HCT116 (cell line): ENCODE measurements at regions of chr15 and their contacts with region 1.

Region 1: GRCh38 chr15:42084460-42085235 is 9.7 kb downstream of the PLA2G4D start:
- DNase-seq: no peak
- ATAC-seq: peak; percentile 96
- H3K4me3 ChIP-seq: no peak overlapping the region
- H3K27ac ChIP-seq: no peak overlapping the region
- H3K4me1 ChIP-seq: peaks cover 0 to 10% of the 10 kb centered on the region in 2 experiments; a peak in 1 of 4 replicates
- H3K27me3 ChIP-seq: no peaks in the 10 kb centered on the region
- CTCF ChIP-seq: peak; percentile 74 to 90 (median 86)
- POLR2A ChIP-seq: no peak
- RAD21 ChIP-seq: peak; percentile 82

Region 2: GRCh38 chr15:41989259-41989933 is 95.3 kb before region 1 on chr15:
- CTCF ChIA-PET with region 1: interaction called, 24 read pairs
- POLR2A ChIA-PET with region 1: no interaction called
- RAD21 ChIA-PET with region 1: interaction called in 1 of 2 experiments, 4 read pairs
- intact Hi-C with region 1: loop called (anchors 1 kb)
- DNase-seq: peak; percentile 55
- ATAC-seq: peak; percentile 99
- H3K4me3 ChIP-seq: no peak overlapping the region
- H3K27ac ChIP-seq: no peak overlapping the region
- H3K4me1 ChIP-seq: no peaks in the 10 kb centered on the region
- H3K27me3 ChIP-seq: no peaks in the 10 kb centered on the region
- CTCF ChIP-seq: peak; percentile 95 to 98 (median 96)
- POLR2A ChIP-seq: no peak
- RAD21 ChIP-seq: peak; percentile 99

Region 3: GRCh38 chr15:42070279-42070975 is 14.2 kb before region 1 on chr15:
- CTCF ChIA-PET with region 1: interaction called, 11 read pairs
- POLR2A ChIA-PET with region 1: no interaction called
- RAD21 ChIA-PET with region 1: no interaction called
- intact Hi-C with region 1: no loop called
- DNase-seq: no peak
- ATAC-seq: no peak
- H3K4me3 ChIP-seq: no peak overlapping the region
- H3K27ac ChIP-seq: no peak overlapping the region
- H3K4me1 ChIP-seq: peaks cover 0 to 9% of the 10 kb centered on the region in 2 experiments; a peak in 2 of 4 replicates
- H3K27me3 ChIP-seq: no peaks in the 10 kb centered on the region
- CTCF ChIP-seq: no peak
- POLR2A ChIP-seq: no peak
- RAD21 ChIP-seq: no peak

Region 4: GRCh38 chr15:42137431-42138261 is 53.0 kb after region 1 on chr15:
- CTCF ChIA-PET with region 1: interaction called, 17 read pairs
- POLR2A ChIA-PET with region 1: no interaction called
- RAD21 ChIA-PET with region 1: interaction called, 3 to 4 read pairs
- intact Hi-C with region 1: no loop called
- DNase-seq: peak; percentile 57
- ATAC-seq: peak; percentile 70
- H3K4me3 ChIP-seq: no peak overlapping the region
- H3K27ac ChIP-seq: no peak overlapping the region
- H3K4me1 ChIP-seq: peaks cover 5 to 8% of the 10 kb centered on the region in 2 experiments; a peak in 3 of 4 replicates
- H3K27me3 ChIP-seq: no peaks in the 10 kb centered on the region; the same call in 1 of the 2 replicates
- CTCF ChIP-seq: peak; percentile 58 to 94 (median 71)
- POLR2A ChIP-seq: no peak
- RAD21 ChIP-seq: peak; percentile 80

Region 5: DNA sequence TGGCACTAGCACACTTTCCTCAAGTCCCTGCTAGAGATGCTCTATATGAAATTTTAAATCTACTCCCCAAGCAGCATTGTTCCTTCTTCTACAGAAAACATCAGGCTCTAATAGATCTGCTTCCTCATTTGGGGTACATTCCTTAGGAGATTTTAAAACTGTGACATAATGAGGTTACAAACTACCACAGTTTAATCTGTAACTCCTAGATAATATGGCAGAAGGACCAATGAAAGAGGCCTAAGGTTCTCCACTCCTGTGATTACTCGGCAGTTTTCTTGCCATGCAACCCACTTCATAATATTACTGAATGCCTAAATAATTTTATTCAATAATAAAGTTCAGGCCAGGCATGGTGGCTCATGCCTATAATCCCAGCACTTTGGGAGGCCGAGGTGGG is 390.2 kb after region 1 on chr15:
- CTCF ChIA-PET with region 1: no interaction called
- POLR2A ChIA-PET with region 1: no interaction called
- RAD21 ChIA-PET with region 1: no interaction called
- intact Hi-C with region 1: loop called (anchors 5 kb)
- DNase-seq: no peak
- ATAC-seq: no peak
- H3K4me3 ChIP-seq: no peak overlapping the region
- H3K27ac ChIP-seq: no peak overlapping the region
- H3K4me1 ChIP-seq: no peaks in the 10 kb centered on the region
- H3K27me3 ChIP-seq: no peaks in the 10 kb centered on the region
- CTCF ChIP-seq: no peak
- POLR2A ChIP-seq: no peak
- RAD21 ChIP-seq: no peak